Right ventricle myocardium inferior (tissue), 1 donor: ENCODE measurements at regions of chr1 and their contacts with region 1.

Region 1: DNA sequence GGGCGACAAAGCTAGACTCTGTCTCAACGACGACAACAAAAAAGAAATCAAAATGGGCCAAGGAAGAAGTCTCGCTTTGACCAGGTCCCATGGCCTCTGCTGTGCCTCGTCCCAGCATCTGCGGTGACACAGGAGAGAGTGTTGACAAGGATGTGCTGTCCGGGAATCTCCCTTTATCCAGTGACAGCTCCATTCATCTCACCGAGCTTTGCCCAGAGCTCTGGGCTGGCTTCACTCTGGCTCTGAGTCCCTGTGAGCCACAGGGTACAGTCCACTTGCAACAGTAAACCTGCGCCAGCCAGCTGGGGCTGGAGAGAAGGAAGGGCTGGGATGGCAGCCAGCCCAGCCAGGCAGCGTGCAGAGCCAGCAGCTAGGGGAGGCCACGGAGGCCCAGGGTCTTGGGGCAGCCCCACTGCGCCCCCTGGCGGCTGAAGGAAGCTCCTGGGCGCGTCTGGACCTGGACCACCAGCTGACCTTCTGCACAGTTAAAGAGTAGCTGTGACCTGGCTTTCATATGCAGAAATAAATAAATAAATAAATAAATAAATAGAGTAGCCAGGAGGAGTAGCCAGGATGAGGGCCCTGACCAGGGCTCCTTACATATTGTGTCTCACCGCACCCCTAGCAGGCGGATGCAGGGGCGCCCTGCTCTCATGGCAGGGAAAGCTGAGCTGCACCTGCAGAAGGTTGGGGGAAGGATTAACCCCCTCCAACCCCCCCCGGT is 29.7 kb downstream of the ENO1 start:
- DNase-seq: peak; percentile 95
- ATAC-seq: peak; percentile 98

Region 2: DNA sequence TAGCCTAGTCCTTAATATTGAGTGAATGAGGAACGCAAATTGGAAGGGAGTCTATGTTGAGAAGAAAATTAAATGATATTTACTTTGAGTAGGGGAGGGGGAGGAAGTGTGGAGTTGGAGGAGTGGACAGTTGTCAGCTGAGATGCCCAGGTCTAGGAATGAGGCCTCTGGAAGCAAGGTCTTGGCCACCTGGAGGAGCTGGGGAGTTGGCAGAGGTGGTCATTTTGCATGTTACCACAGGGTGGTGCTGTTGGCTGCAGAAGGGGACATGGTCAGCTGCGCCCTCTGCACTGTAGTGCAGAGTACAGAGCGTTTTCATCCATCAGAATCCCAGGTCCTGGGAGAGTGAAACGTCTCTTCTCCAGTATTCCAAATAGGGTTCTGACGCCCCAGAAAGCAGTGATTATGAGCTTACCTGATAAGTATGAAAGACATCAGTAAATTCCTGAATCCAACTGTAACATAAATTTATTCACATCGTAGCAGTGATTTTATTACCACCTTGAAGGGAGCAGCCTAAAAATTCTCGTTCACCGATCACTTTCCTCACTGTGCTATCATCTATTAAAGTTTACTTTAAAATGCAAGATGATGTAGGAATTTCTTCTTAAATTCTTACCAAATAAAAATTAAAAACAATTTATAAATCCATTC is 873.5 kb before region 1 on chr1:
- intact Hi-C with region 1: loop called (anchors 10 kb)
- DNase-seq: no peak
- ATAC-seq: peak; percentile 97

Region 3: DNA sequence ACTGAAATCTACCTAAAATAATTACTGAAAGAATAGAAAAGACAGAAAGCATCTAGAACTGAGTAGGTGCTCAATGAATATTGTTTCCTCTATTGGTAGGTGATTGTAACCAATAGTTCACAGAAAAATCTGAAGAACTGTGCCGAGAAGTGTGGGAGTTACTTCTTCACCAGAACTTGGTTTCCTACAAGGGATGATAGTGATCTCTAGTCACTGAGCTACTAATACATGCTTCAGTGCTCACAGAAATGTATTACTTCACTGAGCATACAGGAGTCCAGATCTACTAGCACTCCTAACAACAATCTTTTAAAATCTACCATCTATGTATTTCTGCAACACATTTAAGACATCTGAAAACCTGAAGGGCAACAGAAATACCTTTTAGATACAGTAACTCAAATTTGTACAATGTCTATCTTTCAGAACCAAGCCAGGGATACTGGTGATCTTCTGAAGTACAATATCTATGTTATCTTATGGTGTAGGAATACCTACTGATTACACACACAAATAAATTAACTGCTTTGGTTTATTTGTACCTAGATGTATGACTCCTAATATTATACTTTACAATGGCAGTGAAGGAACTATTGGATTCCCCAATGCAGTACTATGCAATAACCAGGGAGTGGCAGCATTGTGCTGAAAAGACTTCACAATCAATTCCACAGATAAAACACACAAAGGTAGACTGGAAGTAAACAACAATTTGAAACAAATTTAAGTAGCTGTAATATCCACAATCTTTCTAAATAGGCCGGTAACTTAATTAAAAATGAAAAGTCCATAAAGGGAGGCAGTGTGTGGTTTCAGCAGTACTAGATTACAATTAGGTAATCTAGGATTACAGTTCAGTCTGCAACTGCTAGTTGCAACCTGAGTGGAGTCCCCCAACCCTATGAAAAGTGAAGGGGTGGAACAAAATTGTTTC is 287.9 kb before region 1 on chr1:
- intact Hi-C with region 1: loop called (anchors 5 kb)
- DNase-seq: no peak
- ATAC-seq: peak; percentile 60

Region 4: GRCh38 chr1:8727809-8728213 is 121.0 kb before region 1 on chr1:
- intact Hi-C with region 1: loop called (anchors 5 kb)
- DNase-seq: peak; percentile 76
- ATAC-seq: peak; percentile 83

Region 5: GRCh38 chr1:8817406-8818324 is 31.2 kb before region 1 on chr1 and contains the start of gene RERE:
- intact Hi-C with region 1: loop called (anchors 2 kb)
- DNase-seq: peak; percentile 95
- ATAC-seq: peak; percentile 99
- total RNA-seq, gene RERE: 133 TPM